Heart left ventricle (tissue), 16 donors: ENCODE measurements at regions of chr19 and their contacts with region 1.

Region 1: DNA sequence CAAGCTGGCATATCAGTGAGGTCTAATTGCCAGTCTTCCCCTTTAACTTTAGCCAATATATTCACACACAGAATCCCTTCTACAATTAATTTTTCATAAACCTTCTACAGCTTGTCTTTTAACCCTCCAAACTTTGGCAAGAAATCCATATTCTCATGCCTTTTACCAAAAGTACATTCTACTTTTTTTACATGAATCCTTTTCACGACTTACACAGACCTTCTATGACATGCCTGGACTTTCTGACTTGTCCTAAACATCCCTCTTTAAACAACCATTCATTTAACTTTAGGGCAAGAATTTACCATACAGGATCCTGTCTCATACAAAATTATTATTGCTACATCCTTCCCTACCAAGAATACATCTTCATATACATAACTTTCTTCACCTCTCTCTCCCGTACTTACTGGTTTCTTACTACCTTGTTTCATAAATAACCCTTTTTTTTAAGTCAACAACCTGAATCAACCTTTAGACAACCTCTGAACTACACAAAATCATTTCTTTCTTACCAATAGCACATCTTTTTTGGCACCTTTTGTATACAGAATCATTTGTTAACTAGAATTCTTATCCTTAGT is 23.5 kb downstream of the ZNF544 start:
- DNase-seq: no peak
- ATAC-seq: no peak
- H3K4me3 ChIP-seq: no peak overlapping the region
- H3K27ac ChIP-seq: no peak overlapping the region
- H3K4me1 ChIP-seq: no peaks in the 10 kb centered on the region
- H3K27me3 ChIP-seq: no peaks in the 10 kb centered on the region
- CTCF ChIP-seq: no peak
- POLR2A ChIP-seq: no peak

Region 2: GRCh38 chr19:57786291-57786690 is 465.9 kb before region 1 on chr19:
- intact Hi-C with region 1: no loop called
- DNase-seq: no peak
- ATAC-seq: peak in 1 of 4 donors; percentile 32
- H3K4me3 ChIP-seq: no peak overlapping the region
- H3K27ac ChIP-seq: no peak overlapping the region
- H3K4me1 ChIP-seq: peaks cover 0 to 6% (median 0%) of the 10 kb centered on the region in 12 donors
- H3K27me3 ChIP-seq: no peaks in the 10 kb centered on the region
- CTCF ChIP-seq: no peak
- POLR2A ChIP-seq: no peak

Region 3: GRCh38 chr19:57978586-57979289 is 273.5 kb before region 1 on chr19:
- intact Hi-C with region 1: loop called in 1 of 10 experiments (anchors 5 kb)
- DNase-seq: no peak
- ATAC-seq: no peak
- H3K4me3 ChIP-seq: no peak overlapping the region
- H3K27ac ChIP-seq: no peak overlapping the region
- H3K4me1 ChIP-seq: no peaks in the 10 kb centered on the region
- H3K27me3 ChIP-seq: no peaks in the 10 kb centered on the region
- CTCF ChIP-seq: no peak
- POLR2A ChIP-seq: no peak

Region 4: GRCh38 chr19:58196901-58197616 is 55.1 kb before region 1 on chr19:
- intact Hi-C with region 1: loop called in 3 of 10 experiments (anchors 5 to 10 kb)
- DNase-seq: no peak
- ATAC-seq: no peak
- H3K4me3 ChIP-seq: no peak overlapping the region
- H3K27ac ChIP-seq: no peak overlapping the region
- H3K4me1 ChIP-seq: no peaks in the 10 kb centered on the region
- H3K27me3 ChIP-seq: no peaks in the 10 kb centered on the region
- CTCF ChIP-seq: no peak
- POLR2A ChIP-seq: no peak

Region 5: DNA sequence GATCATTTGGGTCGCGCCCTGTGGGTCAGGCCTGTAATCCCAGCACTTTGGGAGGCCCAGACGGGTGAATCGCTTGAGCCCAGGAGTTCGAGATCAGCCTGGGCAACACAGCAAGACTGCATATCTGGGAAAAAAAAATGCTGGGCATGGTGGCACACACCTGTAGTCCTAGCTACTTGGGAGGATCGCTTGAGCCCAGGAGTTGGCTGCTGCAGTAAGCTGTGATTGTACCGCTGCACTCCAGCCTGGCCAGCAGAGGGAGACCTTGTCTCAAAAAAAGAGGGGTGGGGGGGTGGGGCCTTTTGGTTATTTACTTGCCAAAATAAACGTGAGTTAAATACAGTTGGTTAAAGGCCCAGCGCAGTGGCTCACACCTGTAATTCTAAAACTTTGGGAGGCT is 33.3 kb before region 1 on chr19:
- intact Hi-C with region 1: loop called in 1 of 10 experiments (anchors 5 kb)
- DNase-seq: no peak
- ATAC-seq: no peak
- H3K4me3 ChIP-seq: no peak overlapping the region
- H3K27ac ChIP-seq: no peak overlapping the region
- H3K4me1 ChIP-seq: no peaks in the 10 kb centered on the region
- H3K27me3 ChIP-seq: no peaks in the 10 kb centered on the region
- CTCF ChIP-seq: peak in 6 of 12 donors; percentile 16 to 20 (median 17)
- POLR2A ChIP-seq: no peak